Ovary (tissue), 10 donors: ENCODE measurements at regions of chr5 and their contacts with region 1.

Region 1: GRCh38 chr5:36264202-36264760 is 22.6 kb upstream of the NADK2 start:
- DNase-seq: no peak
- H3K4me3 ChIP-seq: no peak overlapping the region
- H3K27ac ChIP-seq: no peak overlapping the region
- H3K4me1 ChIP-seq: no peaks in the 10 kb centered on the region
- H3K27me3 ChIP-seq: no peaks in the 10 kb centered on the region
- CTCF ChIP-seq: no peak
- EP300 ChIP-seq: no peak
- POLR2A ChIP-seq: no peak

Region 2: GRCh38 chr5:35771309-35771708 is 493.0 kb before region 1 on chr5:
- intact Hi-C with region 1: no loop called
- DNase-seq: no peak
- H3K4me3 ChIP-seq: no peak overlapping the region
- H3K27ac ChIP-seq: no peak overlapping the region
- H3K4me1 ChIP-seq: no peaks in the 10 kb centered on the region
- H3K27me3 ChIP-seq: no peaks in the 10 kb centered on the region
- CTCF ChIP-seq: no peak
- EP300 ChIP-seq: no peak
- POLR2A ChIP-seq: no peak

Region 3: GRCh38 chr5:36151434-36152323 is 112.6 kb before region 1 on chr5 and contains the starts of genes LMBRD2 and SKP2:
- intact Hi-C with region 1: no loop called
- DNase-seq: peak; percentile 94 to 97 (median 95)
- H3K4me3 ChIP-seq: peak within 1 kb of the TSS; percentile 92
- H3K27ac ChIP-seq: peak within 1 kb of the TSS; percentile 18 to 42
- H3K4me1 ChIP-seq: peaks cover 3% of the 10 kb centered on the region
- H3K27me3 ChIP-seq: no peaks in the 10 kb centered on the region
- CTCF ChIP-seq: no peak
- EP300 ChIP-seq: no peak
- POLR2A ChIP-seq: no peak
- total RNA-seq, gene LMBRD2: 5.4 to 8.8 (median 6.3) TPM
- total RNA-seq, gene SKP2: 7.9 to 15.4 (median 13.7) TPM

Region 4: DNA sequence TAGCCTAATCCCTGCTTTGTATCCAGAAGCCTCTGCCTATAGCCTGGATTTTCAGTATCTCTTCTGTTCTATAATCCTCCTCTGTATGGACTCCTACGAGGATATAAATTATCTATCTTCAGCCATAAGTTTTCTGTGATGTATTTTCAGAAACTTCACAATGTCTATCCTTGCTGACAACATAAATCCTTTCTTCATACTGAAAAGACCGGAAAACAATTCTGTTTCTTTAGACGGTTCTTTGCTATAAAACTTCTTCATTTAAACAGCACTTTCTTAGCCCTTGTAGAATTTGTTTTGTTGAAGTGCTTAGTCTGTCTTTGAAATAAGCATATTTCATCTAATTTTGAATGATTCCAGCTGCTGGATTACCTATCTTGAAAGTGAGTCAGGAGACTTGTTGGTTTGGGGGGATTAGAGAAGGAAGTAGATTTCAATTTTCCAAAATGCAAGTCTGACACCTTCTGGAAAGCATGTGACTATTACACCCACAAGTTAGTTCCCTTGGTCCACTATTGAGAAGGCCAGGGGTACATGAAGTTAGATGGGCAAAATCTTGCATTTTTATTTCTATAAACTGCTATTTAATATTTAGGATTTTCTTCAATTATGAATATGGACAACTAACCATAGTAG is 133.7 kb after region 1 on chr5:
- intact Hi-C with region 1: loop called in 2 of 4 experiments (anchors 10 kb)
- DNase-seq: no peak
- H3K4me3 ChIP-seq: no peak overlapping the region
- H3K27ac ChIP-seq: no peak overlapping the region
- H3K4me1 ChIP-seq: no peaks in the 10 kb centered on the region
- H3K27me3 ChIP-seq: no peaks in the 10 kb centered on the region
- CTCF ChIP-seq: peak; percentile 33 to 55 (median 40)
- EP300 ChIP-seq: no peak
- POLR2A ChIP-seq: no peak